Activated T-helper 1 cell treated with anti-CD3 and anti-CD28 coated beads, Interleukin-12 subunit alpha, Interleukin-12 subunit beta, Interleukin-2, Interleukin-4 antibody, amounts not matched to agents 30 ng/mL and 10 ng/mL and 1 ng/mL, durations not matched to agents 14 hours and 24 hours and 36 hours (primary cell): ENCODE measurements at regions of chrX and their contacts with region 1.

Region 1: DNA sequence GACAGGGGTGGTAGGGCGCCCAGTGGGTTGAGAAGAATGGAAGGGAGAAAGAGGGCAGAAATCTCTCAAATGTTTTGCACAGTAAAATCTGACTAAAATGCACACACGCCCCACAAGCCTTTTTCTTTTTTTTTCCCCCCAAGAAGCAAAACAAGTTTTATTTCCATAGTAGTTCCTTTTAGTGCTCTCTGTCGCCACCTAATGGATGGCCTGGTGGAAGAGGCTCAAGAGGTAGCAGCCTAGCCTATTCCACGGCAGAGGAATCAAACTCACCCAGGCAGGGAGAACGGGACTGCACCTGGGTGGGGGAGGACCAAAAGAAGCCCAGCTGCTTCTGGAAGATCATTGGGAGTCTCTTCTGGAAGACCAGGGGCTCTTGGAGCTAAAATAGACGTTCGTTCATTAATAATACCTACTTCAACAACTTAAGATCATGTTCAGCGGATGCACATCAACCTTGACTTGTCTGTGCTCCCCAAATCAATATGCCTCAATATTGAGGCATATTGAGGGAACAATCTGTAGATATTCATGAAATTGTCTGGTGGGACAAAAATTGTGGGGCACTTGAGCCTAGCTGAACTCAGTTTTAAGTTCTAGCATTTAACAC is 31.6 kb upstream of the IRAK1 start:
- DNase-seq: peak; percentile 46
- H3K4me3 Mint-ChIP-seq: no peak overlapping the region
- H3K27ac Mint-ChIP-seq: peak overlapping the region; percentile 53
- H3K4me1 Mint-ChIP-seq: peaks cover 9% of the 10 kb centered on the region
- H3K27me3 Mint-ChIP-seq: no peaks in the 10 kb centered on the region

Region 2: DNA sequence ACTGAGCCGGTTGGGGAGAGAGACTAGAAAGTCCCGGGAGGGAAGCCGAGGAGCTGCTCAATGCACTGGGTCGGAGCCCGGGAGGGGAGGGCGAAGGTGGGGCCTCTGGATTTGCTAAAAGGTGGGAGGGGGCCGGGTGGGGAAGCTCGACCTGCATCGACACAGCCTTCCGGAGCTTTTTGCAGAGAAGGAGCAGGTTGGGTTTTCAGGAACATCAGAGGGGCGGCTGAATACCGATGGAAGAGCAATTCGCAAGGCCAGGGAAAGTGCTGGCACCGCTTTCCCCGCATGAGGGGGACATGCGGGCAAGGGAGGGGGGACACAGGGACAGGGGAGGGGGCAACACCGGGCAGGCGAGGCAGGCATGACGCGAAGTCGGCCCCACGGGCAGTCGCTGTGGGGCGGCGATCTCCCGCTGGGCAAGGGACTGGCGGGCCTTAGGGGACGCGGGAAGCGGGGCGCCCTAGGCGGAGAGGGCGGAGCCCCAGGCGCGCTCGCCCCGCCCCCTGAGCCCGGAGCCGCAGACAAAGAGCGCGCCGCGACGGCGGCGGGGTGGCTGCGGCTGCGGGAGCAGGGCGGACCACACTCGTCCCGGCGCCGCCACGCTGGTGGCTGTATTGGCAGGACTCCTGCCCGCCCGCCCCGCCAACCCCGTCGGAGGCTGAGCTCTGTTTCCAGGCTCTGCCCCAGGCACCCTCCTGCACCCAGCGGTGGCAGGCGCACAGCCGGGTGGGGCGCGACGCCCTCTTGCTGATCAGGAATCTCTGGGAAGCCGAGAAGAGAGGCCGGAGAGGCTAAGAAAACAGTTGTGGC is 232.5 kb before region 1 on chrX:
- intact Hi-C with region 1: no loop called
- DNase-seq: peak; percentile 49
- H3K4me3 Mint-ChIP-seq: no peak overlapping the region
- H3K27ac Mint-ChIP-seq: no peak overlapping the region
- H3K4me1 Mint-ChIP-seq: peaks cover 23% of the 10 kb centered on the region
- H3K27me3 Mint-ChIP-seq: peaks cover 19% of the 10 kb centered on the region

Region 3: DNA sequence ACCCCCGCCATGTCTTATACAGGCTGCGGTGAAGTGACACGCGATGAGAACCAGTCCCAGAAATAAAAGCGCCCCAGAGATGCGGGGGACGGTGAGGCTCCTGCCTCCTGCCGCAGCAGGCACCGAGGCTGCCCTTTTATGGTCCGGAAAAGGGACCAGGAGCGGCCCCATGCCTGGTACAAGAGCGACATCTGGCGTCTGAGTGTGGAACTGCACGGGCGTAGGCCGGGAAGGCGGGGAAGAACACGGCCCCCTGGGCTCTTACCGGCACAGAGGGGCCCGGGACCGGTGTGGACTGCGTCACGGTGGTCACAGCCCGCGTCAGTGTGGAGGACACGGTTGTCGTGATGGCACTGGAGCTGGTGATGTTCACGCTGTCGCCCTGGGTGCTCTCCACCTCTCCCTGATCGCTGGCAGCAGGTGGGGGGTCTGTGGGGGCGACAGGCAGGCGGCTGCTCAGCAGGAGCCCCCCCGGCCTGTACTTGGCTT is 97.9 kb before region 1 on chrX:
- intact Hi-C with region 1: no loop called
- DNase-seq: peak; percentile 60
- H3K4me3 Mint-ChIP-seq: no peak overlapping the region
- H3K27ac Mint-ChIP-seq: peak overlapping the region; percentile 23
- H3K4me1 Mint-ChIP-seq: no peaks in the 10 kb centered on the region
- H3K27me3 Mint-ChIP-seq: no peaks in the 10 kb centered on the region

Region 4: DNA sequence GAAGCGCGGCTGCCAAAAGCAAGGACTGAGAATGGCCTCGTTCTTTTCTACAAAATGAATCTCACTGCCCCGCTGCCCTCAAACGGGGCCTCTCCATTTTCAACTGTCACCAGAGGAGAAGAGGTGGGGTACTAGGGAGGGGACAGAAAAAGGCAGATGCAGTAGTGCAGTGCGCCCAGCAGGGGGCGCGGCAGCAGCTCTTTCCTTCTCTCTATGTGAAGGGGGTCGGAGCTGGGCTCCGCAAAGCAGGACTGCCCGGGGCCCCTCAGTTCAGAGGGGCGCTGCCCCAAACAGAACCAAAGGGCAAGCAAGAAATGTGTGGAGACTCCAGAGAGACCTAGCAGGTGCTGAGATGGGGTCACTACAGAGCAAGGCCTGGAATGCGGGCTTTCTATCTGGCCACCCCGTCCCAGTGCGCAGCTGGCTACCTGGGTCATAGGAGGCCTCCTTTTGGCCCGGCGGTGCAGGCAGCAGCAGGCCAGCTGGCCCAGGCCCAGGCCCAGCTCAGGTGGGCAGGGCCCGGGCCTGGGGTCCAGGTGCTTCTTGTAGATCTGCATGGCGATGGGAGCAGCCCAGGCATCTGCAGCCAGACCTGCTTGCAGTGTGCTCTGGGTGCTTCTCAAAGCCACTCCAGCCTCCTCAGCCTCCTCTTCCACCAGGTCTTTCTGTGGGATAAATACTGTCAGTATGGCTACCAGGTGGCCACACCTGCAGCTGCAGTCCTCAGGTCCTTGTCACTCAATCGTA is 37.5 kb before region 1 on chrX:
- intact Hi-C with region 1: loop called (anchors 1 kb)
- DNase-seq: peak; percentile 36
- H3K4me3 Mint-ChIP-seq: no peak overlapping the region
- H3K27ac Mint-ChIP-seq: no peak overlapping the region
- H3K4me1 Mint-ChIP-seq: no peaks in the 10 kb centered on the region
- H3K27me3 Mint-ChIP-seq: no peaks in the 10 kb centered on the region

Region 5: DNA sequence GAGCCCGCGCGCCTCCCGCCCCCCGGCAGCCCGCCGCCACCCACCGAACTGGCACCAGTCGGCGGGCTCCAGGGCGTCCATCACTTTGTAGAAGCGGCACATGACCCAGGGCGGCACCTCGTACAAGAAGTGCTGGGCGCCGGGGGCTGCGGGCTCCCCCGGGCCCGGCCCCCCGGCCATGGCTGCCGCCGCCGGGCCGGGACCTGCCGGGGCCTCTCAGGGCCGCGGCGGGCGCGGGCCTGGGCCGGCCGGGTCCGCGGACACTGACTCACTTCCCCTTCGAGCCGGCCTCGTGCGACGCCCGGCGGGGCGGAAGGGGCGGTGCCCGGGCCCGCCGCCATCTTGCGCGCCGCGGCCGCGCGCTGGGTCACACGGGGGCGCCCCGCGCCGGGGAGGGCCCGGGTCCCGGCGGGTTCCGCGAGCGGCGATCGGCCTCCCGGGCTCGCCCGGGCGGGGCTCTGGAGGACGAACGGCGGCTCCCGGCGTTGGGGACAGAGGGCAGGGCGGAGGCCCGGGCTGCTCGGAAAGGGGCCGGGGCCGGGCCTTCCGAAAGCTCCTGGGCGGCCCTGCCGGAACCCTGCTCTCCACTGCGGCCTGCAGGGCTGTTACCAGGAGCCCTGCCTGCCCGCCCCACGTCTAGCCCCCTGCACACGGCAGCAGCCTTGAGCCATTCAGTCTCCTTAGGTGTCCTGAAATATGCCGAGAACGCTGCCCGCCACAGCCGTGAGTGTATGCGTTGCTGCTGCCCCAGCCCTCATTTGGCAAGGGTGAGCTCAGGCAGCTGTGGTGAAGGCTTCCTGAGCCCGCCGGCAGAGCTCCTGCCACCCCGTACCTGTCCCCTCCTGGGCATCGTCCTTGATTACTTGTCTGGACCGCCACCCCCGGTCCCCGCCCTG is 31.4 kb before region 1 on chrX and contains the start of gene IRAK1:
- intact Hi-C with region 1: loop called (anchors 2 kb)
- DNase-seq: peak; percentile 57
- H3K4me3 Mint-ChIP-seq: peak within 1 kb of the TSS; percentile 94
- H3K27ac Mint-ChIP-seq: peak within 1 kb of the TSS; percentile 89
- H3K4me1 Mint-ChIP-seq: peaks cover 4% of the 10 kb centered on the region
- H3K27me3 Mint-ChIP-seq: no peaks in the 10 kb centered on the region
- total RNA-seq, gene IRAK1: 165 and 172 TPM in 2 replicates